CD8-positive, alpha-beta memory T cell (primary cell): ENCODE measurements at regions of chr20 and their contacts with region 1.

Region 1: DNA sequence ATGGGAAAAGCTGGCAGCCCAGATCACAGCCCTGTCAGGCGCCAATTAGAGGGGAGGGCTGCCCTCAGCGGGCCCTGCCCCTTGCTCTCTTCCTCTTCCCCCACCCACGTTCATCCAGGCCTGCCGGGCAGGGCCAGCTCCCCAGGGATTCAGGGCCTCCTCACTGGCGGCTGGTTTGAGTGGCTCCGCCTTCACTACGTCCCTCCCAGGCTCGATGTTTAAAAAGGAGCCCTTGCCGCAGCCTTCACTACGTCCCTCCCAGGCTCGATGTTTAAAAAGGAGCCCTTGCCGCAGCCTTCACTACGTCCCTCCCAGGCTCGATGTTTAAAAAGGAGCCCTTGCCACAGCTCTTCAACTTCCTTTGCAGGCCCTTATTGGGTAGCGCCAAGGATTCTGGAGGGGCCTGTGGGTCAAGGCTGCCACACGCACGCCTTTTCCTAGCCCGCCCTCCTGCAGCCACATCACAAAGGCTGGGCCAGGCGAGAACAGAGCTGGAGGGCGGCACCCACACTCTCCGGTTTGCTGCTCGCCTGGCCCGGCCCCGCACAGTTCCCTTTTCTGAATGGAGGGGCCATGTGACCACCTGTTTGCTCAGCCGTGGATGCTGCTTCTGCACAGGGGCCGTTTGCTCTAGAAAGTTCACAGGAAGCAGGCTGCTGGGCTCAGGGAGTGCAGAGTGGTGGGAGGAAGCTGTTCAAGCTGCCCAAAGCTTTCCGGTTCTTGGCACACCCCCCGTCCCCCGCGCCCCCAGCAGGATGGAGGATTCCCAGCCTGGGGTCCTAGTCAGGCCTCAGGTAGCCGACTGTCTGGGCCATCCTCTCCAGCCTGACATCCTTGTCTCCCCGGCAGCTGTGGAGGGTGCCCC is 1.6 kb downstream of the SLC17A9 start:
- DNase-seq: peak; percentile 62 to 85 (median 83)
- H3K4me3 ChIP-seq: peak overlapping the region; percentile 52
- H3K4me3 Mint-ChIP-seq: peak overlapping the region; percentile 79 to 92 (median 82)
- H3K27ac ChIP-seq: peak overlapping the region; percentile 63
- H3K27ac Mint-ChIP-seq: peak overlapping the region; percentile 88 to 98 (median 95)
- H3K4me1 ChIP-seq: peaks cover 37% of the 10 kb centered on the region
- H3K4me1 Mint-ChIP-seq: peaks cover 21 to 34% (median 29%) of the 10 kb centered on the region in 3 donors
- H3K27me3 ChIP-seq: no peaks in the 10 kb centered on the region
- H3K27me3 Mint-ChIP-seq: no peaks in the 10 kb centered on the region

Region 2: GRCh38 chr20:62937366-62938104 is 16.5 kb before region 1 on chr20:
- CTCF ChIA-PET with region 1: interaction called, 15 read pairs
- POLR2A ChIA-PET with region 1: interaction called, 27 read pairs
- DNase-seq: peak; percentile 95 to 98 (median 97)
- H3K4me3 ChIP-seq: peak overlapping the region; percentile 93
- H3K4me3 Mint-ChIP-seq: peak overlapping the region in 6 of 7 donors; percentile 94 to 98 (median 98)
- H3K27ac ChIP-seq: peak overlapping the region; percentile 87
- H3K27ac Mint-ChIP-seq: peak overlapping the region; percentile 94 to 98 (median 96)
- H3K4me1 ChIP-seq: peaks cover 49% of the 10 kb centered on the region
- H3K4me1 Mint-ChIP-seq: peaks cover 29 to 44% (median 43%) of the 10 kb centered on the region in 3 donors
- H3K27me3 ChIP-seq: no peaks in the 10 kb centered on the region
- H3K27me3 Mint-ChIP-seq: no peaks in the 10 kb centered on the region

Region 3: GRCh38 chr20:62972270-62973032 is 18.4 kb after region 1 on chr20:
- CTCF ChIA-PET with region 1: interaction called, 13 read pairs
- POLR2A ChIA-PET with region 1: interaction called, 6 read pairs
- DNase-seq: peak; percentile 73 to 89 (median 76)
- H3K4me3 ChIP-seq: no peak overlapping the region
- H3K4me3 Mint-ChIP-seq: peak overlapping the region in 6 of 7 donors; percentile 49 to 86 (median 76)
- H3K27ac ChIP-seq: no peak overlapping the region
- H3K27ac Mint-ChIP-seq: peak overlapping the region in 6 of 8 donors; percentile 10 to 75 (median 43)
- H3K4me1 ChIP-seq: peaks cover 16% of the 10 kb centered on the region
- H3K4me1 Mint-ChIP-seq: peaks cover 16 to 32% (median 17%) of the 10 kb centered on the region in 3 donors
- H3K27me3 ChIP-seq: peaks cover 28% of the 10 kb centered on the region
- H3K27me3 Mint-ChIP-seq: peaks cover 42 to 48% of the 10 kb centered on the region in 2 donors

Region 4: GRCh38 chr20:63540417-63541186 is 586.5 kb after region 1 on chr20:
- CTCF ChIA-PET with region 1: no interaction called
- POLR2A ChIA-PET with region 1: no interaction called
- DNase-seq: no peak
- H3K4me3 ChIP-seq: no peak overlapping the region
- H3K4me3 Mint-ChIP-seq: no peak overlapping the region
- H3K27ac ChIP-seq: no peak overlapping the region
- H3K27ac Mint-ChIP-seq: no peak overlapping the region
- H3K4me1 ChIP-seq: peaks cover 23% of the 10 kb centered on the region
- H3K4me1 Mint-ChIP-seq: peaks cover 0 to 18% (median 3%) of the 10 kb centered on the region in 3 donors
- H3K27me3 ChIP-seq: no peaks in the 10 kb centered on the region
- H3K27me3 Mint-ChIP-seq: no peaks in the 10 kb centered on the region